ENCODE measurements at regions of chr21 and their contacts with region 1.

Region 1: DNA sequence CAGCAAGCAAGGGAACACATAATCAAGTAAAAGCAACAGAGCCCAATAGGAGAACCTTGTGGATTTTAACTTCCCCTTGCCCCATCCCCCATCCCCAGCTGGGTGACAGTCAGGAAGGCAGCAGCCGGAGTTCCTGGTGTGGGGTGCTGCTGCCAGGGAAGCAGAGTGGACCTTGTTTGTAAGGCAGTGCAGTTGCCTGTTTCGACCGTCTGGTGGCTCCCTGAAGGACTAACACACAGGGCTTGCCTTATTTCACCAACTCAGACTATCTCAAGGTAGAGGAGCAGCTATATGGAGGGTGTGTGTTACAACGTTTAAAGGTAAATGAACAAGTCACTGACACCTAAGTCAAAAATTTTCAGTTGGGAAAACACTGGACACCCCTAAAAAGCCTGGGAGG is 6.6 kb downstream of the KRTAP10-8 start:
- DNase-seq: peak in 4 of 14 experiments; percentile 23 to 55 (median 34)
- ATAC-seq: peak; percentile 55
- H3K4me3 ChIP-seq: no peak overlapping the region
- H3K4me3 Mint-ChIP-seq: peak overlapping the region; percentile 31
- H3K27ac ChIP-seq: peak overlapping the region; percentile 44 to 74
- H3K27ac Mint-ChIP-seq: peak overlapping the region; percentile 88
- H3K4me1 ChIP-seq: peaks cover 42% of the 10 kb centered on the region
- H3K4me1 Mint-ChIP-seq: peaks cover 52% of the 10 kb centered on the region
- H3K27me3 ChIP-seq: no peaks in the 10 kb centered on the region
- H3K27me3 Mint-ChIP-seq: no peaks in the 10 kb centered on the region
- CTCF ChIP-seq: no peak

Region 2: GRCh38 chr21:44547656-44548331 is 70.7 kb before region 1 on chr21:
- CTCF ChIA-PET with region 1: no interaction called
- POLR2A ChIA-PET with region 1: interaction called, 19 read pairs
- intact Hi-C with region 1: loop called (anchors 2 to 10 kb)
- DNase-seq: peak in 12 of 14 experiments; percentile 16 to 74 (median 36)
- ATAC-seq: peak; percentile 94
- H3K4me3 ChIP-seq: peak overlapping the region; percentile 38
- H3K4me3 Mint-ChIP-seq: peak overlapping the region; percentile 83
- H3K27ac ChIP-seq: peak overlapping the region; percentile 6 to 72
- H3K27ac Mint-ChIP-seq: peak overlapping the region; percentile 90
- H3K4me1 ChIP-seq: peaks cover 18% of the 10 kb centered on the region
- H3K4me1 Mint-ChIP-seq: peaks cover 33% of the 10 kb centered on the region
- H3K27me3 ChIP-seq: no peaks in the 10 kb centered on the region
- H3K27me3 Mint-ChIP-seq: no peaks in the 10 kb centered on the region
- CTCF ChIP-seq: no peak

Region 3: DNA sequence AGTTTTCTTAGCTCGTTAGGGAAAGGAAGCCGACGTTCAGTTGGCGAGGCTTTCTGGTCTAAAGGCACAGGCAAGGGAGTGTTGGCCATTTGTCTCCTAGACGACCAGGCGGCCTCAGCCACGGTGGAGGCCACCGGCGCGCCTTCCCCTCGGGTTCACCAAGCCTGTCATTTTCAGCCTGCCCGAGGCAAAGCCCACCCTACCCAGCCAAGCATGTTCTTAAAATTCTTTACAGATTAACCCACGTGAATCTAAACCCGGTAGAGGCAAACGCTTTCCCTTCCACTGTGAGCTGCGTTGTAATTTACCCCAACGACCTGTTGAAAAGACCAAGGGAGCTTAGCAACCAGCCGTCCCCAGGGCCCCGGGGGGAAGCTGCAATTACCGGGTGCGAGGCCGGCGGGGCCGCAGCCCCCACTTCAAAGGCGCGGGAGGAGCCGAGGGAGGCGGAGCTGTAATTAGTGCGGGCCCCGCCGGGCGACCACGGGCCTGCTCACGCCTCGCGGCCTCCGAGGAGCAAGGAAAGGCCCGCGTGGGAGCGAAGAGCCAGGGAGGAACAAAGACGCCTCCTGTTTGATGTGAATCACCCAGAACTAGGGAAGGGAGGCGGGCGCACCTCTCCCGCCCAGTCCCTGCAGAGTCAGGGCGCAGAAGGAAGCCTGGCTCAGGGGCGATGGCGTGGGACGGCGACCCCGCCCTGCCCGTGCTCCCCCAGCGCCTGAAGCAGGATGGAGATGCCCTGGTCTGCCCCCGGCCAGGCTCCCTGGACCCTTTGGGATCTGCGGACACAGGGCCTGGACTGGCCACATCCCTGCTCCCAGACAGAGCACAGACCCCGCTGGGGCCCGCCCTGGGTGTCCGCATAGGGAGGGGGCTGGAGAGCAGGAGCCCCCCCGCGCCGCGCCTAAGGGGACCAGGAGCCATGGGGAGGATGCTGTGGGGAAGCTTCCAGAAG is 105.0 kb after region 1 on chr21:
- CTCF ChIA-PET with region 1: no interaction called
- POLR2A ChIA-PET with region 1: no interaction called
- intact Hi-C with region 1: loop called in 1 of 2 experiments (anchors 5 kb)
- DNase-seq: peak in 5 of 14 experiments; percentile 8 to 48 (median 26)
- ATAC-seq: peak; percentile 51
- H3K4me3 ChIP-seq: peak overlapping the region; percentile 42
- H3K4me3 Mint-ChIP-seq: peak overlapping the region; percentile 59
- H3K27ac ChIP-seq: no peak overlapping the region
- H3K27ac Mint-ChIP-seq: no peak overlapping the region
- H3K4me1 ChIP-seq: peaks cover 17% of the 10 kb centered on the region
- H3K4me1 Mint-ChIP-seq: peaks cover 10% of the 10 kb centered on the region
- H3K27me3 ChIP-seq: peaks cover 17 to 39% of the 10 kb centered on the region in 2 experiments
- H3K27me3 Mint-ChIP-seq: peaks cover 60% of the 10 kb centered on the region
- CTCF ChIP-seq: no peak